T-cell (primary cell): ENCODE measurements at regions of chr1 and their contacts with region 1.

Region 1: DNA sequence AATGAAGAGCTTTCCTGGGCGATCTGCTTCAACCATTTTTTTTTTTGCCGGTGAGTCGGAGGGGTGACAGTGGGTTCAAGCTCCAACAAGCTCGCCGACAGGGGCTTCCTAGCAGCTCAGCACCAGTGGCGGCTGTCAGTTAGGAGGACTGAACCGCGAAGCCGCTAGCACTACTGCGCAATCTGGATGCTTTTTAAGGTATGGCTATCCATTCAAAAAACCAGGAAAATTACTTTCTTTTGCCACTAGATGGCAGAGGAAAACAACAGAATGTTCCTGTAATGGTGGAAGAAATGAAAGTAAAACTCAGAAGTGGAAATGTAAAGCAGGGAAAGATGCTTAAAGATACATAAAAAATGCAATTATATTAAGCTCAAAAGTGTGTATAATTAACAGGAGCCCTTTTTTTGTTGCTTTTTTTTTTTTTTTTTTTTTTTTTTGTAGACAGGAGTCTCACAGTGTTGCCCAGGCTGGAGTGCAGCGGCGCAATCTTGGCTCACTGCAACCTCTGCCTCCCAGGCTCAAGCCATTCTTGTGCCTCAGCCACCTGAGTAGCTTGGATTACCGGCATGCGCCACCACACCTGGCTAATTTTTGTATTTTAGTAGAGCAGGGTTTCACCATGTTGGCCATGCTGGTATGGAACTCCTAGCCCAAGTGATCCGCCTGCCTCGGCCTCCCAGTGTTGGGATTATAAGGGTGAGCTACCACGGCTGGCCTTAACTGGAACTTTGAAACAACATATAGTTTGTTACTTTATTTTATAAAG is 8.5 kb downstream of the KYAT3 start:
- DNase-seq: peak in 14 of 35 experiments; percentile 10 to 79 (median 23)
- ATAC-seq: peak; percentile 64 to 82 (median 70)
- H3K4me3 ChIP-seq: peak overlapping the region in 1 of 2 donors; percentile 2
- H3K4me3 Mint-ChIP-seq: peak overlapping the region; percentile 18 to 39 (median 38)
- H3K27ac ChIP-seq: peak overlapping the region; percentile 49
- H3K27ac Mint-ChIP-seq: peak overlapping the region; percentile 81 to 92
- H3K4me1 ChIP-seq: peaks cover 2 to 12% of the 10 kb centered on the region in 2 experiments
- H3K4me1 Mint-ChIP-seq: peaks cover 70 to 80% (median 77%) of the 10 kb centered on the region in 3 donors
- H3K27me3 ChIP-seq: no peaks in the 10 kb centered on the region
- H3K27me3 Mint-ChIP-seq: no peaks in the 10 kb centered on the region

Region 2: DNA sequence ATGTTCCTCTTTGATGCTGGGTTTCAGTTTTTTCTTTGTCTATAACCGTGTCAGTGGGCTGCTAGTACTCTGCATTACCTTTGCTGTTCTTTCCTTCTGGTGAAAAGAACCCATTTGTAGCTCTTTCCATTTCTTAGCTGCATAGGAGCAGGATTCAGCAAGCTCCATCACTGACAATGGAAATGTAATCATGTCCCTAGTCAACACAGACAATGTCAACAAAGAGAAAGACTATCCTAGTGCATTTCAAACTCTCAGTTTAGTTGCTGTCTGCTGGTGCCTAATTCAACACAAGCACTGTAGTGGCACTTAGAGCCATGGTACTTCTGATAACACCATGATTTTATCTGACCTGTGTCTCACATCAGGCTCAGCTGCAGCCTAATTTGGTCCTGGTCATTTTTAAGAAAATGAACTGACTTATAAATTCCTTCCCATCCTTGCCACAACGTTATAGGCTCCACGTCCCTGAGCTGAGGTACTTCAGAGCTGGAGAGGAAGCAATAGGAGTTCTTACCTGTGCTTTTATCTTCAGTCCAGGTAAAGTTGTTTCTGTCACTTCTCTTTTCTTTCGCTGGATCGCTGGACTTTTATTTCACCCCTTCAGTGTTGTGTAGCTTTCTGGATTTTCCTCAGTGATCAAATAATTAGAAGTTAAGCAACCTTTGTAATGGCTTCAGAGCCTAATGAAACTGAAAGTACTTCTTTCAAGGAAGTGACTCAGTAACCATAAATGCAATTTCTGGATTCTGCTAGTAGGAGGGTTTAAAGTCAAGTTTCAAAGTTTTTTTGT is 38.4 kb after region 1 on chr1 and contains the start of gene GBP3:
- CTCF ChIA-PET with region 1: interaction called, 3 to 15 read pairs
- POLR2A ChIA-PET with region 1: interaction called in 1 of 2 experiments, 10 read pairs
- DNase-seq: peak in 4 of 35 experiments; percentile 1 to 64 (median 10)
- ATAC-seq: peak; percentile 70 to 82 (median 77)
- H3K4me3 ChIP-seq: peak within 1 kb of the TSS; percentile 57 to 77
- H3K4me3 Mint-ChIP-seq: peak within 1 kb of the TSS; percentile 80 to 96 (median 92)
- H3K27ac ChIP-seq: peak within 1 kb of the TSS; percentile 88
- H3K27ac Mint-ChIP-seq: peak within 1 kb of the TSS; percentile 95 to 97
- H3K4me1 ChIP-seq: peaks cover 14 to 26% of the 10 kb centered on the region in 2 experiments
- H3K4me1 Mint-ChIP-seq: peaks cover 43 to 58% (median 54%) of the 10 kb centered on the region in 3 donors
- H3K27me3 ChIP-seq: no peaks in the 10 kb centered on the region
- H3K27me3 Mint-ChIP-seq: no peaks in the 10 kb centered on the region
- total RNA-seq, gene GBP3: 26.7 to 52.0 (median 39.2) TPM

Region 3: DNA sequence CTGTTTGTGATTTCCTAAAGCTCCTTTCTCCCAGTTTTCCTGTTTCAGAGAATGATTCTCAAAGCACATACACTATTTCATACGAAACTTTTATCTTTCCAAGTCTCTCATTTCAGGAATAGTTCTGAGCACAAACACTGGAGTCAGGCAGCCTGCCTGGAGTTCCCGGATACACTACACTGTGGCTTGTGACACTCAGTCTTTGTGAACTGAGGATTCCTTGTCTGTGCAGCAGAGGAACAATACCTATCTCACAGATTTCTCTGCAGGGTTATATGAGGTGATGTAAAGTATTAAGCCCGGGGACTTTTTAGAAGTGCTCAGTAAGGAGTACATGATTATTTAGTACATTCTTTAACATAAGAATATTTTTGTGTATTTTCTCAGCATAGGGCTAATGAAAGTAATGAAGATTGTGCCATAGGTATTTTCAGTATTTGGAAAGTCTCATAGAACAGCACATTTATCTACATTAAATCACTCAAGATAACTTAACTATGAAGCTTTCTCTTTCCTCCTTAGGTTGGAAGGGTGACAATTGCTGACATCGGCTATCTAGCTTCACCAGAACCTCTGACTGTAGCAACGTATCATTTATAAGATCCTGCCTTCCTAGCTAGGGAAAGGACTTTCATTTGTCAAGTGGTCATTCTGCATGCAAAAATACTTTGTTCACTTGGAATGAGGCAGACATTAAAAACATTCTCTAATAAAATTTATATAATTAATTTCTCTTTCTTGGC is 129.1 kb after region 1 on chr1:
- CTCF ChIA-PET with region 1: interaction called in 1 of 2 experiments, 16 read pairs
- POLR2A ChIA-PET with region 1: no interaction called
- DNase-seq: no peak
- ATAC-seq: no peak
- H3K4me3 ChIP-seq: no peak overlapping the region
- H3K4me3 Mint-ChIP-seq: no peak overlapping the region
- H3K27ac ChIP-seq: no peak overlapping the region
- H3K27ac Mint-ChIP-seq: peak overlapping the region; percentile 42 to 62
- H3K4me1 ChIP-seq: peaks cover 0 to 4% of the 10 kb centered on the region in 2 experiments
- H3K4me1 Mint-ChIP-seq: peaks cover 41 to 67% (median 44%) of the 10 kb centered on the region in 3 donors
- H3K27me3 ChIP-seq: no peaks in the 10 kb centered on the region
- H3K27me3 Mint-ChIP-seq: no peaks in the 10 kb centered on the region

Region 4: GRCh38 chr1:89454845-89455521 is 471.0 kb after region 1 on chr1:
- CTCF ChIA-PET with region 1: interaction called, 16 to 24 read pairs
- POLR2A ChIA-PET with region 1: interaction called in 1 of 2 experiments, 12 read pairs
- DNase-seq: peak; percentile 8 to 79 (median 49)
- ATAC-seq: peak; percentile 75 to 91 (median 79)
- H3K4me3 ChIP-seq: no peak overlapping the region
- H3K4me3 Mint-ChIP-seq: no peak overlapping the region
- H3K27ac ChIP-seq: no peak overlapping the region
- H3K27ac Mint-ChIP-seq: no peak overlapping the region
- H3K4me1 ChIP-seq: peaks cover 0 to 2% of the 10 kb centered on the region in 2 experiments
- H3K4me1 Mint-ChIP-seq: peaks cover 9 to 12% (median 11%) of the 10 kb centered on the region in 3 donors
- H3K27me3 ChIP-seq: no peaks in the 10 kb centered on the region
- H3K27me3 Mint-ChIP-seq: peaks cover 7 to 21% of the 10 kb centered on the region in 2 donors

Region 5: DNA sequence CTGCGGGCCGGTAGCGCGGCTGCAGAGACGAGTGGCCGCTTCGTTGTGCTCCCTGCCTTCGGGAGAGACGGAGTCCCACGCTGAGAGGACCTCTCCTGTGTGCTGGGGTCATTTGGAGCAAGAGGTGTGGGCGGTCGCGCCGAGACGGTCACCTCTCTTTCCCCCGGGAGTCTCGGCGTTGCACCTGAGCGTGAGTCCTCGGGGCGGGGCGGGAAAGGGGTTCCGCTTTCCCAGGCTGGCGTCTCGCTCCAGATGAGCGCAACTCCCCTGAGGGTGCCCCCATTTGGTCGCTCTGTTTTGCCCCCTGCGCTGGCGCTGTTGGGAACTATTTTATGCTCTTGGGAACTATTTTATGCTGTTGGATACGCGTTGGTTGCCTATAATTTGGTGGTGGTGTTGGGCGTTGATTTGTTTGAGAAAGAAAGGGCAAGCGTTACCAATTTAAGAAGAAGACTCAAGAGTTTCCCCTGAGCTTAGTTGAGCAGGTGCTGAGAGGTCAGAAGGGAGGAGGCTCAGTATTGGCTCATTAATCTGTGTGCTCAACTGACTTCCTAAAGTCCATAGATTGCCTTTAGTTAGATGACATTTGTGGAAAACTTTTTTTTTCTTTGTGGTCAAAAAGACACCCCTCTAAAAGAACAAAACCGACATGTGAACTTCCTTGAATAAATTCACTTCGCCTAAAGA is 541.3 kb after region 1 on chr1:
- CTCF ChIA-PET with region 1: no interaction called
- POLR2A ChIA-PET with region 1: no interaction called
- DNase-seq: peak in 34 of 35 experiments; percentile 1 to 54 (median 12)
- ATAC-seq: peak; percentile 3 to 13 (median 6)
- H3K4me3 ChIP-seq: peak overlapping the region; percentile 87 to 91
- H3K4me3 Mint-ChIP-seq: peak overlapping the region in 1 of 3 donors; percentile 90
- H3K27ac ChIP-seq: peak overlapping the region; percentile 92
- H3K27ac Mint-ChIP-seq: peak overlapping the region; percentile 82 to 91
- H3K4me1 ChIP-seq: peaks cover 21 to 28% of the 10 kb centered on the region in 2 experiments
- H3K4me1 Mint-ChIP-seq: peaks cover 20 to 27% (median 20%) of the 10 kb centered on the region in 3 donors
- H3K27me3 ChIP-seq: no peaks in the 10 kb centered on the region
- H3K27me3 Mint-ChIP-seq: no peaks in the 10 kb centered on the region

Region 6: GRCh38 chr1:89622895-89623294 is 638.9 kb after region 1 on chr1:
- CTCF ChIA-PET with region 1: interaction called in 1 of 2 experiments, 3 read pairs
- POLR2A ChIA-PET with region 1: interaction called in 1 of 2 experiments, 33 read pairs
- DNase-seq: peak in 1 of 35 experiments; percentile 67
- ATAC-seq: peak; percentile 54 to 67 (median 64)
- H3K4me3 ChIP-seq: no peak overlapping the region
- H3K4me3 Mint-ChIP-seq: no peak overlapping the region
- H3K27ac ChIP-seq: no peak overlapping the region
- H3K27ac Mint-ChIP-seq: peak overlapping the region; percentile 72 to 75
- H3K4me1 ChIP-seq: peaks cover 2 to 7% of the 10 kb centered on the region in 2 experiments
- H3K4me1 Mint-ChIP-seq: peaks cover 57 to 66% (median 66%) of the 10 kb centered on the region in 3 donors
- H3K27me3 ChIP-seq: no peaks in the 10 kb centered on the region
- H3K27me3 Mint-ChIP-seq: no peaks in the 10 kb centered on the region